ENCODE measurements at regions of chr4 and their contacts with region 1.

Region 1: DNA sequence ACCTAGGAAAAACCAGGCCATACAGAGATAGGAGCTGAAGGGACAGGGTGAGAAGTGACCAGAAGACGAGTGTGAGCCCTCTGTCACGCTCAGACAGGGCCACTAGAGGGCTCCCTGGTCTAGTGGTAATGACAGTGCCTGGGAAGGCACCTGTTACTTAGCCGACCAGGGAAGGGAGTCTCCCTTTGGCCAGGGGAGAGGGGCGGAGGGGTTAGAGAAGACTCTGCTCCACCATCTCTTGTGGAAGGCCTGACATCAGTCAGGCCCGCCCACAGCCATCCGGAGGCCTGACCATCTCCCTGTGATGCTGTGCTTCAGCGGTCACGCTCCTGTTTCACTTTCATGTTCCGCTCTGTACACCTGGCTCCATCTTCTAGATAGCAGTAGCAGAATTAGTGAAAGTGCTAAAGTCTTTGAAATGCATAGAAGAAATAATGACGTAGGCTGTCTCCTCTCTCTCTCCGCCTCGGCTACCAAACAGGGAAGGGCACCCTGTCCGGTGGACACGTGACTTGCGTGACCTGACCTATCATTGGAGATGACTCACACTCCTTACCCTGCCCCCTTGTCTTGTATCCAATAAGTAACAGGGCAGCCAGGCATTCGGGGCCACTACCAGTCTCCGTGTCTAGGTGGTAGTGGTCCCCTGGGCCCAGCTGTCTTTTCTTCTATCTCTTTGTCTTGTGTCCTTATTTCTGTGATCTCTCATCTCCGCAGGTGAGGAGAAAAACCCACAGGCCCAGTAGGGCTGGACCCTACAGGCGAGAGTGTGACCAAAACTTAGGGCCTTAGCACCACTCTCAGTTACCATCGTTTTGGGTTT is 26.7 kb downstream of the HTT-AS start:
- DNase-seq: peak; percentile 59 to 79 (median 71)
- H3K4me3 ChIP-seq: peak overlapping the region in 4 of 7 experiments; percentile 23 to 68 (median 59)
- H3K27ac ChIP-seq: peak overlapping the region in 1 of 2 experiments; percentile 34
- H3K4me1 ChIP-seq: peaks cover 6 to 23% (median 15%) of the 10 kb centered on the region in 4 experiments
- H3K27me3 ChIP-seq: no peaks in the 10 kb centered on the region

Region 2: GRCh38 chr4:2741626-2742025 is 306.0 kb before region 1 on chr4:
- CTCF ChIA-PET with region 1: no interaction called
- POLR2A ChIA-PET with region 1: no interaction called
- DNase-seq: no peak
- H3K4me3 ChIP-seq: no peak overlapping the region
- H3K27ac ChIP-seq: no peak overlapping the region
- H3K4me1 ChIP-seq: peaks cover 0 to 15% (median 9%) of the 10 kb centered on the region in 4 experiments
- H3K27me3 ChIP-seq: no peaks in the 10 kb centered on the region

Region 3: GRCh38 chr4:2977211-2978088 is 70.2 kb before region 1 on chr4:
- CTCF ChIA-PET with region 1: interaction called, 12 read pairs
- POLR2A ChIA-PET with region 1: no interaction called
- DNase-seq: no peak
- H3K4me3 ChIP-seq: no peak overlapping the region
- H3K27ac ChIP-seq: no peak overlapping the region
- H3K4me1 ChIP-seq: no peaks in the 10 kb centered on the region
- H3K27me3 ChIP-seq: no peaks in the 10 kb centered on the region

Region 4: DNA sequence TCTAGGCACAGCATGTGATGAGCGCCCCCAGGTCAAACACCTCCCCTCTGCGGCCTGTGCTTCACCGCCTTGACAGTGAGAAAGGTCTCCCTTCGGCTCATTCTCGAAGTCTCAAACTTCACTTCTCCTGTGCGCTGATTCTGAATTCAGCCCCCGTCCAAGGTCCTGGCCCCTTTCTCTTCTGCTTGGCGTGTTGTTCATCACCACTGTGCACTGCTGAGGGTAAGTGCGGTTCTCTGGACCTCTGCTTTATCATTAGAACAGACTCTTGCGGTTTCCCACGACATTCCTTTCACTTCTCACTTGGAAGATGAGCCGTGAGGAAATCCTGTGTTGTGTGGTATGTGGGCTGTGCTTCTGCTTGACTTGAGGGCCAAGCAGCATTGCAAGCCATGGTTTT is 14.8 kb after region 1 on chr4:
- CTCF ChIA-PET with region 1: interaction called, 21 read pairs
- POLR2A ChIA-PET with region 1: no interaction called
- DNase-seq: peak in 1 of 3 donors; percentile 61
- H3K4me3 ChIP-seq: no peak overlapping the region
- H3K27ac ChIP-seq: no peak overlapping the region
- H3K4me1 ChIP-seq: peaks cover 0 to 16% (median 14%) of the 10 kb centered on the region in 4 experiments
- H3K27me3 ChIP-seq: no peaks in the 10 kb centered on the region

Region 5: GRCh38 chr4:3074078-3074795 is 26.6 kb after region 1 on chr4 and contains the starts of genes HTT and HTT-AS:
- CTCF ChIA-PET with region 1: interaction called, 15 read pairs
- POLR2A ChIA-PET with region 1: no interaction called
- DNase-seq: peak; percentile 92 to 98 (median 97)
- H3K4me3 ChIP-seq: peak within 1 kb of the TSS; percentile 88 to 99 (median 94)
- H3K27ac ChIP-seq: peak within 1 kb of the TSS; percentile 68 to 87
- H3K4me1 ChIP-seq: peaks cover 17 to 44% (median 43%) of the 10 kb centered on the region in 4 experiments
- H3K27me3 ChIP-seq: no peaks in the 10 kb centered on the region

Region 6: GRCh38 chr4:3082925-3083515 is 35.3 kb after region 1 on chr4:
- CTCF ChIA-PET with region 1: interaction called, 12 read pairs
- POLR2A ChIA-PET with region 1: interaction called, 3 read pairs
- DNase-seq: peak; percentile 40 to 82 (median 69)
- H3K4me3 ChIP-seq: peak overlapping the region in 4 of 7 experiments; percentile 6 to 58 (median 29)
- H3K27ac ChIP-seq: peak overlapping the region; percentile 26 to 67
- H3K4me1 ChIP-seq: peaks cover 17 to 65% (median 38%) of the 10 kb centered on the region in 4 experiments
- H3K27me3 ChIP-seq: no peaks in the 10 kb centered on the region

Region 7: DNA sequence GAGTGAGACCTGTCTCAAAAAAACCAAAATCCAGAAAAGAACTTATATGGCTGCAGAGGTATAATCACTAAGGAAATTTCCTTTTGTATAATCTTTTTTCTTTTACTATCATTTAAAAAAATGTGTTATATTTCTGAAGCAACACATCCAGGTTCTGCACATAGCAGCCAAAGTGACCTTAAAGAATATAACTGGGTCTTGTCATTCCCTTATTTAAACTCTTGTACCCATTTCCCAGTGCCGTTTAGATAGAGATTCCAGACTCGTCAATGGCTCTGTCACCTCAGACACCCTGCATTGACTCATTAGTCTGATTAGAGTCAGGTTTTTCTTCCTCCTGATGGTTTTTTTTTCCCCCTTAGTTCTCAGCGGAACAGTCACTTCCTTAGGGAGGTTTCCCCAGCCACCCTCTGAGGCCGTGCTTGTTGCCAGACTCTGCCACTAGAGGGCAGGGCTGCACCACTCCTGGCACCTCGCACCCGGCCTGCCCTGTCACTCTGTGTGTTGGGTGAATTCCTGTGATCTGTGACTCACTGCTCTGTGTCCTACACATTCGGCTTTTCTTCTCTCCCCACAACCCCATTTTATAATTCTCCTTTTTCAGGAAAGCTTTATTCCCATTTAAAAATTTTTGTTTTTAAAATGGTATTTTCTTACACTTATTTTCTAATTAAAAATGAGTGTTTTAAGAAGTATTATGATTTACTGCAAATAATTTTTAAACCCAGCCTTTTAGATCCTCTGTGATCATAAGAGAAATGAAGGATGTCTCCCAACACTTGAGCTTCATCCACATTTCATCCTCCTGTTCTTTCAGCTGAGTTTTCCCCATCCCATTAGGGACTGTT is 58.9 kb after region 1 on chr4:
- CTCF ChIA-PET with region 1: interaction called, 21 read pairs
- POLR2A ChIA-PET with region 1: no interaction called
- DNase-seq: peak; percentile 89 to 92 (median 89)
- H3K4me3 ChIP-seq: no peak overlapping the region
- H3K27ac ChIP-seq: peak overlapping the region in 1 of 2 experiments; percentile 40
- H3K4me1 ChIP-seq: peaks cover 0 to 13% (median 2%) of the 10 kb centered on the region in 4 experiments
- H3K27me3 ChIP-seq: no peaks in the 10 kb centered on the region